SK-N-SH (cell line): ENCODE measurements at regions of chr4 and their contacts with region 1.

Region 1: DNA sequence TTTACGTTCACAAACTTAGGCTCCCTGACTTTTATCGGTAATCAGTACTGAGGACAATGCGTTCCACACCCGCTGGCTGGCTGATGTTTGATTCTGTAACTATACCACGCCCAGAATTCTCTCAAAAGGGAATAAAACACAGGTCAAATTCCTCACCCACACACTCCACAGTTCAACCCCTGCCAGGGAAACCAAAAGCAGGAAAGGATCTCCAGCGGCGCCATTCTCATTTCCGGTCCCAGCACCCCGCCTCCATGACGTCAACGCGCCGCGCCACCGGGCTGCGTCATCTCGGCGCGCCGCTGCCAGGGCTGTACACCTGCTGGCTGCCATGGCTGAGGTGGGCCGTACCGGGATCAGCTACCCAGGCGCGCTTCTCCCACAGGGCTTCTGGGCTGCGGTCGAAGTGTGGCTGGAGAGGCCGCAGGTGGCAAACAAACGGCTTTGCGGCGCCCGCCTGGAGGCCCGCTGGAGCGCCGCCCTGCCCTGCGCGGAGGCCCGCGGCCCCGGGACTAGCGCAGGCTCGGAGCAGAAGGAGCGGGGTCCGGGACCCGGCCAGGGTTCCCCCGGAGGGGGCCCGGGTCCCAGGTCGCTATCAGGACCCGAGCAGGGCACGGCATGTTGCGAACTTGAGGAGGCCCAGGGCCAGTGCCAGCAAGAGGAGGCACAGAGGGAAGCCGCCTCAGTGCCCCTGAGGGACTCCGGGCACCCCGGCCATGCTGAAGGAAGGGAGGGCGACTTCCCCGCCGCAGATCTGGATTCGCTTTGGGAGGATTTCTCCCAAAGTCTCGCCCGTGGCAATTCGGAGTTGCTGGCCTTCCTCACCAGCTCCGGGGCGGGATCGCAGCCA is at the starts of genes ACOX3 and TRMT44:
- DNase-seq: peak; percentile 96
- H3K4me3 ChIP-seq: peak within 1 kb of the TSS; percentile 84 to 99
- H3K27ac ChIP-seq: peak within 1 kb of the TSS; percentile 85 to 92
- H3K4me1 ChIP-seq: peaks cover 4 to 21% of the 10 kb centered on the region in 2 experiments; a peak in 3 of 4 replicates
- H3K27me3 ChIP-seq: no peaks in the 10 kb centered on the region
- CTCF ChIP-seq: no peak
- EP300 ChIP-seq: no peak
- RAD21 ChIP-seq: no peak
- polyA plus RNA-seq, gene ACOX3: 7.0 and 8.4 TPM in 2 replicates
- polyA plus RNA-seq, gene TRMT44: 6.0 and 6.9 TPM in 2 replicates

Region 2: DNA sequence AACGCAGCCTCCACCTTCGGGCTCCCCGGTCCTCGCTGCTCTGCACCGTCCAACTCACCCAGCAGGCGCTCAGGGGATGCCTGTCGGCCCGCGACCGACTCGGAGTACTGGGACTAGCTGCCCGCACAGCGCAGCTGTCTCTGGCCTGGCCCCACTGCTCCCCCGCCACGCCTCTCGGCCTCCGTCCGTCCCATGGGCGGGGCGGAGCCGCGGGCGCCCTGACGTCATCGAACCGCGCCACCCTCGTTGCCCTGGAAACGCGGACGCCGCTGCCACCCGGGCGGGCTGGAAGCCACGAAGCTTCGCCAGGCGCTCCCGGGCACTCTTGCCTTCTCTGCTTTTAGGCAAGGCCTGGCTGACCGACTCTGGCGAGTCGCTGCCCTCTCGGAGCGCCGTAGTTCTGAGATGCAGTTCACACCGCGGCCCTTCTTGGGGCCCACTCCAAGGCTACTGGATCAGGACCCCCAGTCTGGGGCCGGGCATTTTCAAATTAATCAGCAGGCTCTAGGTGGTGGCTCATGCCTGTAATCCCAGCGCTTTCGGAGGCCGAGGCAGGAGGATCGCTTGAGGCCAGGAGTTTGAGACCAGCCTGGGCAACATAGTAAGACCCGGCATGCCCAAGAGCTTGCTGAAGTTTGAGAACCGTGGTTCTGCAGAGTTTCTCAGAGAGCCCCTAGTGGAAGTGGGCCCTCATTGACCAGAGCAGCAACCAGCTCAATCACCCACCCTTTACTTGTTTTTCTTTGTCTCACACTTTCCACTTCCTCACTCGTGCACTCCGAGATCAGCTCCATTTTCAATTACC is 12.2 kb before region 1 on chr4:
- CTCF ChIA-PET with region 1: interaction called, 8 read pairs
- POLR2A ChIA-PET with region 1: interaction called, 12 read pairs
- DNase-seq: peak; percentile 99
- H3K4me3 ChIP-seq: peak overlapping the region; percentile 80 to 90
- H3K27ac ChIP-seq: peak overlapping the region; percentile 47 to 69
- H3K4me1 ChIP-seq: peaks cover 0 to 16% of the 10 kb centered on the region in 2 experiments; a peak in 1 of 4 replicates
- H3K27me3 ChIP-seq: no peaks in the 10 kb centered on the region
- CTCF ChIP-seq: peak; percentile 61
- EP300 ChIP-seq: no peak
- RAD21 ChIP-seq: no peak

Region 3: GRCh38 chr4:8515316-8516062 is 74.8 kb after region 1 on chr4:
- CTCF ChIA-PET with region 1: no interaction called
- POLR2A ChIA-PET with region 1: no interaction called
- DNase-seq: no peak
- H3K4me3 ChIP-seq: no peak overlapping the region
- H3K27ac ChIP-seq: no peak overlapping the region
- H3K4me1 ChIP-seq: no peaks in the 10 kb centered on the region; a peak in 1 of 4 replicates
- H3K27me3 ChIP-seq: no peaks in the 10 kb centered on the region; the same call in 1 of the 2 replicates
- CTCF ChIP-seq: no peak
- EP300 ChIP-seq: no peak
- RAD21 ChIP-seq: no peak

Region 4: DNA sequence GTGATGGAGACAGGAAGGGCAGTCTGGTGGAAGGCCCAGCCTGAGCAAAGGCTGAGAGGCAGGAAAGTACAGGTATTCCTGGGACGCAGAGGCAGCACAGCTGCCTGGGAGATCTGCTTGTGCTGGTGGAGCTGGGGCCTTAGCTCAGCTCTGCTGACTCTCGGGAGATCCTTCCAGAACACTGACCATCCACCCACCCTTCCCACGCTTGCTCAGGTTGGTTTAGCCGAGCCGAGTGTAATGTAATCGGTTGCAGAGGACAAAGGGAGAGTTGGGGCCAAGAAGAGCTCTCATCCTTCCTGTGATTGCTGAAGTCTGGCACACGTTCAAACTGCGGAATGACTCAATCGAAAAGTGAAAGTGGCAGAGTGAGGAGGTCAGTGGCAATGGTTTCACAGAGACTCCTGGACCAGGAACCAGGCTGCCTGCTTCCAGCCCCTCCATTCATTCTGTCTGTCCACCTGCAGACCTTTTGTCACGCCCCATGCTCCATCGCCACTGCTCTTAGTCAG is 96.4 kb after region 1 on chr4:
- CTCF ChIA-PET with region 1: no interaction called
- POLR2A ChIA-PET with region 1: no interaction called
- DNase-seq: no peak
- H3K4me3 ChIP-seq: no peak overlapping the region
- H3K27ac ChIP-seq: peak overlapping the region in 1 of 2 experiments; percentile 42; a peak in 1 of 4 replicates
- H3K4me1 ChIP-seq: peaks cover 0 to 7% of the 10 kb centered on the region in 2 experiments; a peak in 2 of 4 replicates
- H3K27me3 ChIP-seq: no peaks in the 10 kb centered on the region
- CTCF ChIP-seq: no peak
- EP300 ChIP-seq: no peak
- RAD21 ChIP-seq: no peak